Sigmoid colon (tissue), 7 donors: ENCODE measurements at regions of chr5 and their contacts with region 1.

Region 1: GRCh38 chr5:62305715-62306322 is at the start of gene KIF2A:
- DNase-seq: peak; percentile 94
- H3K4me3 ChIP-seq: peak within 1 kb of the TSS; percentile 79 to 97 (median 94)
- H3K27ac ChIP-seq: peak within 1 kb of the TSS; percentile 91 to 98 (median 93)
- H3K4me1 ChIP-seq: peaks cover 0 to 24% (median 16%) of the 10 kb centered on the region in 4 donors
- H3K27me3 ChIP-seq: no peaks in the 10 kb centered on the region
- CTCF ChIP-seq: no peak
- EP300 ChIP-seq: no peak
- POLR2A ChIP-seq: no peak
- total RNA-seq, gene KIF2A: 29.6 to 41.7 (median 30.9) TPM

Region 2: GRCh38 chr5:61200582-61201155 is 1105.2 kb before region 1 on chr5:
- intact Hi-C with region 1: no loop called
- DNase-seq: no peak
- H3K4me3 ChIP-seq: no peak overlapping the region
- H3K27ac ChIP-seq: no peak overlapping the region
- H3K4me1 ChIP-seq: no peaks in the 10 kb centered on the region
- H3K27me3 ChIP-seq: no peaks in the 10 kb centered on the region
- CTCF ChIP-seq: no peak
- EP300 ChIP-seq: no peak
- POLR2A ChIP-seq: no peak

Region 3: GRCh38 chr5:62065050-62065449 is 240.8 kb before region 1 on chr5:
- intact Hi-C with region 1: no loop called
- DNase-seq: no peak
- H3K4me3 ChIP-seq: no peak overlapping the region
- H3K27ac ChIP-seq: no peak overlapping the region
- H3K4me1 ChIP-seq: no peaks in the 10 kb centered on the region
- H3K27me3 ChIP-seq: no peaks in the 10 kb centered on the region
- CTCF ChIP-seq: no peak
- EP300 ChIP-seq: no peak
- POLR2A ChIP-seq: no peak

Region 4: GRCh38 chr5:62354028-62354874 is 48.4 kb after region 1 on chr5:
- intact Hi-C with region 1: loop called (anchors 5 kb)
- DNase-seq: no peak
- H3K4me3 ChIP-seq: no peak overlapping the region
- H3K27ac ChIP-seq: no peak overlapping the region
- H3K4me1 ChIP-seq: no peaks in the 10 kb centered on the region
- H3K27me3 ChIP-seq: no peaks in the 10 kb centered on the region
- CTCF ChIP-seq: peak; percentile 10 to 64 (median 56)
- EP300 ChIP-seq: no peak
- POLR2A ChIP-seq: no peak

Region 5: DNA sequence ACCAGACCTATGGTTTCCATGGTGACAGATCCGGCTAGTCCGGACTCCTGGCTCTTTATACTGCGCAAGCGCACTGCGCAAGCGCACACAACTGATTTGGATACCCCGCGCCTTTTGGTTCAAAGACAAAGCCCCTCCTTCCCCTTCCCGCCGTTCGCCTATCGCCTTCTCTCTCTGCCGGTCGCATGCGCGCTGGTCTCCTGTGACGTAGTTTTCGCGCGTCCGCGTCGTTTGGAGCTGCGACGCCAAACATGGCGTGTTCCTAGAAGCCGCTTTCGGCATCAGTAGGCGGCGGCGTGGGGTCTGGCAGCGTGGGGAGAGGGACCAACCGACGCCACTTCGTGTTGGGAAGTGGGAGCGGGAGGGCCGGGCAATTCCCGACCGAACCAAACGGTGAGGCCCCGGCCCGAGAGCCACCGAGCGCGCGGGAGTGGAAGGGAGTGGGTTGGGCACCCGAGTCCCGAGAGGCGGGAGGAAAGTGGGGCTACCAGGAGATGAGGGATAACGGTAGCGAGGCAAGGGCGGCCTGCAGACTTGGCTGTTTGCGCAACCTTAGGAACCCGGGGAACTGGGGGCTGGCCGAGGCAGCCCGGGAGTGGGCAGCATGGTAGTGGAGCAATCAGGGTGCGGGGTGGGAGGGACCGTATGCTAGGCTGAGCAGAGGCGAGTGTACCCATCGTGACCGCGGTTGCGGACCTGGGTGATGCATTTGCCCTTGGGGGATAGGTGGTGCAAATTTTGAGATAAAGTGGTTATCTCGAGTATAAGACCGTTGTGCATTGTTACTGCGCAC is 106.9 kb after region 1 on chr5 and contains the start of gene IPO11:
- intact Hi-C with region 1: loop called (anchors 5 kb)
- DNase-seq: peak; percentile 99
- H3K4me3 ChIP-seq: peak within 1 kb of the TSS; percentile 79 to 99 (median 90)
- H3K27ac ChIP-seq: peak within 1 kb of the TSS; percentile 76 to 85 (median 80)
- H3K4me1 ChIP-seq: peaks cover 0 to 14% (median 9%) of the 10 kb centered on the region in 4 donors
- H3K27me3 ChIP-seq: no peaks in the 10 kb centered on the region
- CTCF ChIP-seq: no peak
- EP300 ChIP-seq: peak in 1 of 4 donors; percentile 2
- POLR2A ChIP-seq: peak; percentile 43 to 60
- total RNA-seq, gene IPO11: 20.9 to 38.8 (median 22.4) TPM

Region 6: DNA sequence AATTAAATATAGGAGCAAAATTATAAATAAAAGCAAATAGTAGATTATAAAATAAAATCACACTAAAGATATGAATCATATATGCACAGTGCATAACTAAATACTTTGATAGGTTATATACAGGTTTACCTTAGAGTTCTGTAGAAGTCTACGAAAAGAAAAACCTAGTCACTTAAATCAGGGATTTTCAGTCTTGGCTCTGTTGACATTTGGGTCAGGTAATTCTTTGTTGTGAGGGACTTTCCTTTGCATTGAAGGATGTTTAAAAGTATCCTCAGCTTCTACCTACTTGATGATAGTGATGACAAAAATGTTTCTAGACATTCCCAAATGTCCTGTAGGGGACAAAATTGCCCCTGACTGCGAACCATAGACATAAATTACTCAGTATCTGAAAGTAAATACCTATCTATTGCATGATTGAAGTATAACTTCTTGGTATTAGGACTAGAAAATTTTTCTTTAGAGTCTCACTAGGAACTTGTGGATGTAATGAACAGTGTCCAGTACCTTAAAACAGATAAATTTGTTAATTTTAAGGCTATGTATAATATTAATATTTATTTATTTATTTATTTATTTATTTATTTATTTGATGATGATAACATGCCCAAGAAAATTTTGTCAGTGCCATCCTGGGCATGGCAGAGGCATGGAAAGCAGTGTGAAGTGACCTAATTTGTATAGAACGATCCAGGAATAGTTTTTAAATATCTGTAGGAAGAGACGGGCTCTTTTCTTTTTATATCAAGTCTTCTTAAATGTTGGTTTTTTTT is 228.8 kb after region 1 on chr5:
- intact Hi-C with region 1: no loop called
- DNase-seq: no peak
- H3K4me3 ChIP-seq: no peak overlapping the region
- H3K27ac ChIP-seq: no peak overlapping the region
- H3K4me1 ChIP-seq: no peaks in the 10 kb centered on the region
- H3K27me3 ChIP-seq: no peaks in the 10 kb centered on the region
- CTCF ChIP-seq: no peak
- EP300 ChIP-seq: no peak
- POLR2A ChIP-seq: no peak